SK-N-SH (cell line): ENCODE measurements at regions of chr17 and their contacts with region 1.

Region 1: GRCh38 chr17:74176546-74177001 is 26.9 kb upstream of the RPL38 start:
- DNase-seq: peak; percentile 91
- H3K4me3 ChIP-seq: peak overlapping the region in 1 of 2 experiments; percentile 18; a peak in 1 of 4 replicates
- H3K27ac ChIP-seq: no peak overlapping the region
- H3K4me1 ChIP-seq: peaks cover 0 to 10% of the 10 kb centered on the region in 2 experiments; a peak in 1 of 4 replicates
- H3K27me3 ChIP-seq: no peaks in the 10 kb centered on the region
- CTCF ChIP-seq: peak; percentile 94
- EP300 ChIP-seq: no peak
- RAD21 ChIP-seq: peak; percentile 100

Region 2: GRCh38 chr17:73645050-73645978 is 531.3 kb before region 1 on chr17:
- CTCF ChIA-PET with region 1: interaction called, 46 read pairs
- POLR2A ChIA-PET with region 1: no interaction called
- DNase-seq: peak; percentile 90
- H3K4me3 ChIP-seq: peak overlapping the region in 1 of 2 experiments; percentile 35; a peak in 3 of 4 replicates
- H3K27ac ChIP-seq: no peak overlapping the region
- H3K4me1 ChIP-seq: peaks cover 0 to 21% of the 10 kb centered on the region in 2 experiments; a peak in 2 of 4 replicates
- H3K27me3 ChIP-seq: peaks cover 41% of the 10 kb centered on the region
- CTCF ChIP-seq: no peak
- EP300 ChIP-seq: no peak
- RAD21 ChIP-seq: no peak

Region 3: GRCh38 chr17:73976676-73977521 is 199.7 kb before region 1 on chr17:
- CTCF ChIA-PET with region 1: interaction called, 17 read pairs
- POLR2A ChIA-PET with region 1: no interaction called
- DNase-seq: peak; percentile 61
- H3K4me3 ChIP-seq: no peak overlapping the region
- H3K27ac ChIP-seq: no peak overlapping the region
- H3K4me1 ChIP-seq: peaks cover 0 to 29% of the 10 kb centered on the region in 2 experiments; a peak in 1 of 4 replicates
- H3K27me3 ChIP-seq: no peaks in the 10 kb centered on the region
- CTCF ChIP-seq: no peak
- EP300 ChIP-seq: no peak
- RAD21 ChIP-seq: no peak

Region 4: GRCh38 chr17:74089869-74090464 is 86.6 kb before region 1 on chr17:
- CTCF ChIA-PET with region 1: interaction called, 50 read pairs
- POLR2A ChIA-PET with region 1: no interaction called
- DNase-seq: peak; percentile 63
- H3K4me3 ChIP-seq: no peak overlapping the region
- H3K27ac ChIP-seq: no peak overlapping the region
- H3K4me1 ChIP-seq: peaks cover 0 to 8% of the 10 kb centered on the region in 2 experiments; a peak in 2 of 4 replicates
- H3K27me3 ChIP-seq: no peaks in the 10 kb centered on the region
- CTCF ChIP-seq: peak; percentile 23
- EP300 ChIP-seq: no peak
- RAD21 ChIP-seq: peak; percentile 76

Region 5: GRCh38 chr17:74160656-74161502 is 15.7 kb before region 1 on chr17:
- CTCF ChIA-PET with region 1: interaction called, 13 read pairs
- POLR2A ChIA-PET with region 1: no interaction called
- DNase-seq: no peak
- H3K4me3 ChIP-seq: no peak overlapping the region
- H3K27ac ChIP-seq: no peak overlapping the region
- H3K4me1 ChIP-seq: no peaks in the 10 kb centered on the region
- H3K27me3 ChIP-seq: no peaks in the 10 kb centered on the region
- CTCF ChIP-seq: no peak
- EP300 ChIP-seq: no peak
- RAD21 ChIP-seq: no peak

Region 6: DNA sequence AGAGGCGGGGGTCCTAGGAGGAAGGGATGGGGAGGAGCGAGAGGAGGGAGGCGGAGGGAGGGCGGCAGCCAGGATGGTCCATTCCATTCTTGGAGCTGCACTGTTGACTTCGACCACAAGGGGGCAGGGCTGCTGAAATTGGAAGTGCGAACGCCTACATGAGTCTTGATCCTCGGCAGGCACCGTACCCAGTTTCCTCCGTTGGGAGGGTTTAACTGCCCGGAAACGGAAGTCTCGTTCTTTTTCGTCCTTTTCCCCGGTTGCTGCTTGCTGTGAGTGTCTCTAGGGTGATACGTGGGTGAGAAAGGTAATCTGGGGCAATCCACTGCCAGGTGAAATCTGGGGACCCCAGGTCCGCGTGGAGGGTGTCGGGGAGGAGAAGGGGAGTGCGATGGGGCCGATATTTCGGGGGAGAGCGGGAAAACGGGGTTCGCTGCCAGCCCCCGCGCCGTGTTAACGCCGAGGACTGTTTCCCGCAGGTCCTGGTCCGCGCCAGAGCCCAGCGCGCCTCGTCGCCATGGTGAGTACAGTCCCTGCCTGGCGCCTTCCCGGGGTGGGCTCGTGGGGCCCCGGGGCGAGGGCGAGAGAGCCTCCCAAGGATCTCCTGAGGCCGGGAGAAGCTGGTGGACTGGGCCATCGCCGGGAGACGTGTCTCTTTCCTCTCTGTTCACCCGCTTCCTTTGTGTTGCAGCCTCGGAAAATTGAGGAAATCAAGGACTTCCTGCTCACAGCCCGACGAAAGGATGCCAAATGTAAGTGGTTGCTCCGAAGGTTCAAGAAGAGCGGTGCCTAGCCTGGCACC is 27.1 kb after region 1 on chr17 and contains the start of gene RPL38:
- CTCF ChIA-PET with region 1: interaction called, 284 read pairs
- POLR2A ChIA-PET with region 1: no interaction called
- DNase-seq: peak; percentile 98
- H3K4me3 ChIP-seq: peak within 1 kb of the TSS; percentile 72 to 99
- H3K27ac ChIP-seq: peak within 1 kb of the TSS; percentile 63 to 81
- H3K4me1 ChIP-seq: peaks cover 22 to 36% of the 10 kb centered on the region in 2 experiments
- H3K27me3 ChIP-seq: no peaks in the 10 kb centered on the region
- CTCF ChIP-seq: peak; percentile 99
- EP300 ChIP-seq: peak in 1 of 2 experiments; percentile 75; a peak in 3 of 4 replicates
- RAD21 ChIP-seq: peak; percentile 57
- polyA plus RNA-seq, gene RPL38: 816 and 4,154 TPM in 2 replicates